Activated T-helper 1 cell treated with anti-CD3 and anti-CD28 coated beads, Interleukin-12 subunit alpha, Interleukin-12 subunit beta, Interleukin-2, Interleukin-4 antibody, amounts not matched to agents 30 ng/mL and 10 ng/mL and 1 ng/mL, durations not matched to agents 14 hours and 24 hours and 36 hours (primary cell): ENCODE measurements at regions of chr6 and their contacts with region 1.

Region 1: DNA sequence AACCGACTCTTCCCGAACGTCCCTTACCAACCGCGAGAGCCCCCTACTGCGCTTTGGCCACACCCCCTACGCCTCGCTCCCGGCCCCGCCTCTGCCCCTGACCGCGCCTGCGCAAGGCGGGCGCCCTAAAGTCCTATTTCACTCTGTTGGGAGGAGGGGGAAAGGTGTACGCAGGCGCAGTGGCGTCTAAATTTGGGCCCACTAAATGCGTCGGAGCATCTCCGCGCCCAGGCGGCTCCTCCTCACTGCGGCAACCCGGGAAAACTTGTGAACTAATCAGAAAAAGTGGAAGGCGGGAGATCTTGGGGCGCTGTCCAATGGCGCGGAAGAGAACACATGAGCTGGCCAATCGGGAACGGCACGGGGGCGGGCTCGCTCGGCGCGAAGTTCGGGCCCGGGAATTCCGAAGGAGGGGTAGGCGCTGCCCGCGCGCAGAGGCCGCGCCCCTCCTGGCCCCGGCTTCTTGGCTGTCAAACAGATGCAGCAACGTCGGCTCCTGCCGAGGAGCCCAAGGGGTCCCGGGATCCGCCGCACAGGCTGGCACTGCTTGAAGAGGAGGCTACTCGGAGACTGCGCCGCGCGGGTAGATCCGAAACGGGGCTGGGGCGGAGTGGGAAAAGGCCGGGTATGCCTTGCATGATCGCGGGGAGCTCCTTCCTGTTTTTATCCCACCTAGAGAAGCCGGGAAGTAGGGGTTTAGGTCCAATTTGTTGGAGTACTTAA is at the start of gene TCF19:
- DNase-seq: peak; percentile 99
- H3K4me3 Mint-ChIP-seq: peak within 1 kb of the TSS; percentile 82
- H3K27ac Mint-ChIP-seq: peak within 1 kb of the TSS; percentile 75
- H3K4me1 Mint-ChIP-seq: peaks cover 29% of the 10 kb centered on the region
- H3K27me3 Mint-ChIP-seq: no peaks in the 10 kb centered on the region
- total RNA-seq, gene TCF19: 75.9 and 78.4 TPM in 2 replicates

Region 2: GRCh38 chr6:29723262-29723665 is 1435.0 kb before region 1 on chr6 and contains the start of gene HLA-F:
- intact Hi-C with region 1: no loop called
- DNase-seq: peak; percentile 85
- H3K4me3 Mint-ChIP-seq: peak within 1 kb of the TSS; percentile 96
- H3K27ac Mint-ChIP-seq: peak within 1 kb of the TSS; percentile 92
- H3K4me1 Mint-ChIP-seq: peaks cover 53% of the 10 kb centered on the region
- H3K27me3 Mint-ChIP-seq: no peaks in the 10 kb centered on the region
- total RNA-seq, gene HLA-F: 293 and 314 TPM in 2 replicates

Region 3: GRCh38 chr6:30571075-30571768 is 587.1 kb before region 1 on chr6 and contains the start of gene ABCF1:
- intact Hi-C with region 1: loop called (anchors 1 kb)
- DNase-seq: peak; percentile 100
- H3K4me3 Mint-ChIP-seq: peak within 1 kb of the TSS; percentile 98
- H3K27ac Mint-ChIP-seq: peak within 1 kb of the TSS; percentile 98
- H3K4me1 Mint-ChIP-seq: peaks cover 62% of the 10 kb centered on the region
- H3K27me3 Mint-ChIP-seq: no peaks in the 10 kb centered on the region
- total RNA-seq, gene ABCF1: 115 and 120 TPM in 2 replicates

Region 4: GRCh38 chr6:30907758-30908591 is 250.3 kb before region 1 on chr6 and contains the start of gene GTF2H4:
- intact Hi-C with region 1: loop called (anchors 1 kb)
- DNase-seq: peak; percentile 92
- H3K4me3 Mint-ChIP-seq: peak within 1 kb of the TSS; percentile 99
- H3K27ac Mint-ChIP-seq: peak within 1 kb of the TSS; percentile 72
- H3K4me1 Mint-ChIP-seq: peaks cover 15% of the 10 kb centered on the region
- H3K27me3 Mint-ChIP-seq: no peaks in the 10 kb centered on the region
- total RNA-seq, gene GTF2H4: 65.3 and 71.3 TPM in 2 replicates

Region 5: GRCh38 chr6:31070711-31071197 is 87.5 kb before region 1 on chr6:
- intact Hi-C with region 1: no loop called
- DNase-seq: no peak
- H3K4me3 Mint-ChIP-seq: no peak overlapping the region
- H3K27ac Mint-ChIP-seq: no peak overlapping the region
- H3K4me1 Mint-ChIP-seq: no peaks in the 10 kb centered on the region
- H3K27me3 Mint-ChIP-seq: peaks cover 2% of the 10 kb centered on the region

Region 6: GRCh38 chr6:31197559-31198305 is 39.4 kb after region 1 on chr6:
- intact Hi-C with region 1: loop called (anchors 1 kb)
- DNase-seq: peak; percentile 92
- H3K4me3 Mint-ChIP-seq: peak overlapping the region; percentile 98
- H3K27ac Mint-ChIP-seq: peak overlapping the region; percentile 99
- H3K4me1 Mint-ChIP-seq: peaks cover 53% of the 10 kb centered on the region
- H3K27me3 Mint-ChIP-seq: no peaks in the 10 kb centered on the region

Region 7: DNA sequence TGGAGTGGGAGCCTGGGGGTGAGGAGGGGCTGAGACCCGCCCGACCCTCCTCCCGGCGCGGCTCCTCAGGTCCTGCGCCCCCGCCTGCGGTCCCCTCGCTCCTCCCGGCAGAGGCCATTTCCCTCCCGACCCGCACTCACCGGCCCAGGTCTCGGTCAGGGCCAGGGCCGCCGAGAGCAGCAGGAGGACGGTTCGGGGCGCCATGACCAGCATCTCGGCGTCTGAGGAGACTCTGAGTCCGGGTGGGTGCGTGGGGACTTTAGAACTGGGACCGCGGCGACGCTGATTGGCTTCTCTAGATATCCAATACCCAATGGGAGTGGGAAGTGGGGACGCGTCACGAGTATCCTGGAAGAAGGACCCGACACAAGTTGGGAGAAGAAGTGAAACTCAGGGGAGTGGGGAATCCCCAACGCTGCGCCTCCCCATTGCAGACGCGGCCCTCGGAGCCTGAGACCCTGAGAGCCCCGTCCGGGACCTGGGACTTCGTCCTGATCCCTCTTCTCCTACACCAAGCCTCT is 198.7 kb after region 1 on chr6 and contains the start of gene HLA-B:
- intact Hi-C with region 1: loop called (anchors 1 kb)
- DNase-seq: peak; percentile 67
- H3K4me3 Mint-ChIP-seq: peak within 1 kb of the TSS; percentile 95
- H3K27ac Mint-ChIP-seq: peak within 1 kb of the TSS; percentile 95
- H3K4me1 Mint-ChIP-seq: peaks cover 64% of the 10 kb centered on the region
- H3K27me3 Mint-ChIP-seq: peaks cover 8% of the 10 kb centered on the region
- total RNA-seq, gene HLA-B: 3,770 and 3,814 TPM in 2 replicates

Region 8: GRCh38 chr6:31541658-31542521 is 383.6 kb after region 1 on chr6 and contains the start of gene DDX39B:
- intact Hi-C with region 1: loop called (anchors 5 kb)
- DNase-seq: peak; percentile 92
- H3K4me3 Mint-ChIP-seq: peak within 1 kb of the TSS; percentile 100
- H3K27ac Mint-ChIP-seq: peak within 1 kb of the TSS; percentile 97
- H3K4me1 Mint-ChIP-seq: peaks cover 41% of the 10 kb centered on the region
- H3K27me3 Mint-ChIP-seq: peaks cover 3% of the 10 kb centered on the region
- total RNA-seq, gene DDX39B: 628 and 637 TPM in 2 replicates